IMR-90 (cell line): ENCODE measurements at regions of chr9 and their contacts with region 1.

Region 1: DNA sequence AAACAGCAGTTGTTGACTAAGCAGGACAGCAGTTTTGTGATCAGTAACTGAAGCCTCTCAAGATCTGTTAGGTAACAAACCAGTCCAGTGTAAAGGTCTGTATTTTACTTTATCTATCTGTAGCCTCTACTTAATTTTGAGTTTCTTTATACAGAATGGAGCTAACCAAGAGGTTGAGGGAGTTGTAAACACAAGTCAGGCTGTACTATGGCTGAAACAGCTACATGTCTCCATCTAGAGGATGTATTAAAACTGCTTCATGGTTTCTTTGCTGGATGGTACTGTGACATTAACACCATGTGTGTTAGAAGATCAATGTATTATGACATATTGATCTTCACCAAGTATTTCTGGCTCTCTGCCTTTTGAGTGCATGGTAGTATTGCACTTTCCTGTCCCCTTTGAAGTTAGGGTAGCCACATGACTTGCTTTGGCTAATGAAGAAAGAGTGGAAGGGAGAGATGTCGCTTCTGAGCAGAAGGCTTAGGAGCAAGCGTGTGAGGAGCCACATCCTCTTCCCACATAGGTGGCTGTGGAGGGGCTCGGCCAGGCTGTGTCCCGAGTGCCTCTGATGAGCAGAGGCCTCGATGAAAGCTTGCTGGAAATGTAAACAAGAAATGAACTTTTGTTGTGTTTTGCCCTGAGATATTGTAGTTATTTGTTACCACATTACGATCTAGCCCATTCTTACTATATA is 105.6 kb upstream of the PCA3 start:
- DNase-seq: peak; percentile 76
- ATAC-seq: peak; percentile 59
- H3K4me3 ChIP-seq: no peak overlapping the region
- H3K27ac ChIP-seq: no peak overlapping the region
- H3K4me1 ChIP-seq: peaks cover 9% of the 10 kb centered on the region
- H3K27me3 ChIP-seq: peaks cover 4% of the 10 kb centered on the region; the same call in 1 of the 2 replicates
- CTCF ChIP-seq: peak; percentile 83
- POLR2A ChIP-seq: no peak
- RAD21 ChIP-seq: peak; percentile 85

Region 2: DNA sequence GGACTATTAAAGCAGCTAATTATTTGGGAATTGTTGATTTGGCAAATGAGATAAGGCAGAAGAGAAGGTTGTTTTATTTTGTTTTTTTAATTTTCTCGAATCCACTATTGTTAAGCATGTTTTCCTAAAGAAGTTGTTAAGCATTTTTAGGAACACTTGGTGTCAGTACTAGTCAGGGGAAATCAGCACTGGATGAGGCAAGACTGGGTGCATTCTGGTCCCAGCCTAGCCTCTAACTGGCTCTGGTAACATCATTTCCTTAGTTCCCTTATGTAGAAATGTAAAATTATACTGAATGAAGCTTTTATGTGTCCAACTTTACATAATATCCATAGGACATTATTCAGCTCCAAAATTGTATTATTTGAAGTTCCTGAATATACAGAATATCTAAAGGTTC is 572.1 kb before region 1 on chr9:
- CTCF ChIA-PET with region 1: no interaction called
- POLR2A ChIA-PET with region 1: interaction called, 14 read pairs
- dilution Hi-C with region 1: no loop called
- in situ Hi-C with region 1: no loop called
- intact Hi-C with region 1: no loop called
- DNase-seq: peak; percentile 26
- ATAC-seq: peak; percentile 46
- H3K4me3 ChIP-seq: no peak overlapping the region
- H3K27ac ChIP-seq: no peak overlapping the region
- H3K4me1 ChIP-seq: no peaks in the 10 kb centered on the region
- H3K27me3 ChIP-seq: no peaks in the 10 kb centered on the region
- CTCF ChIP-seq: peak; percentile 44
- POLR2A ChIP-seq: no peak
- RAD21 ChIP-seq: peak; percentile 52

Region 3: DNA sequence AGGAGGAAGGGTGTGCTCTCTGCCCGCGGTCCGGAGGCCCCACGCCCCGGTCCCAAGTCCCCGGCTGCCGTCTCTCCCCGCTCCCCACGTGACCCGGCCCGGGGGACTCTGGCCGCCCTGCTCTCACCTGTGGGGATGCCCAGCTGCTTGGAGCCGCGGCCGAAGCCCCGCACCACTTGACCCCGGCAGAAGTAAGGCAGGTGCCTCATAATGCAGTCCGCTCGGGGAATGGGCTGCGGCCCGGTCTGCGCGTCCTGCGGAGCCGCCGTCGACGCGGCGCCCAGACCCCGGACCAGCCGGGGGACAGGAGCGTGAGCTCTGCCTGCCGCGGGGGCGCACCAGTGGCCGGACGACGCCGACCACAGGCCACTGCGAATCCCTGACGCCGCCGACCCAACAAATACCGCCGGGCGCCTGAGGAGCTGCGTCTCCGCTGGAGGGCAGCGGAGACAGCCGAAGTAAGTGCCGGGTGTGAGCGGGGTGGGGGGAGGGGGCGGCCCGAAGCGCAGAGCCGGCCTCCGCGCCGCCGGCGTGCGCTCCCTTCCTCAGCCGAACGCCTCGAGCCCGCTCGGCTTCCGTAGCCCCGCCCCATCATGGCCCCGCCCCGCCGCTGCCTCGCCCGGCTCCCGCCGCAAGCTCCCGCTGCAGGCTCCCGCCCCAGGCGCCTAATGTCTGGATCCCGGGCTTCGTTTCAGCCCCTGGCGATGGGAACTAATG is 264.6 kb before region 1 on chr9 and contains the start of gene RFK:
- CTCF ChIA-PET with region 1: no interaction called
- POLR2A ChIA-PET with region 1: no interaction called
- dilution Hi-C with region 1: no loop called
- in situ Hi-C with region 1: no loop called
- intact Hi-C with region 1: loop called (anchors 2 kb)
- DNase-seq: peak; percentile 93
- ATAC-seq: peak; percentile 96
- H3K4me3 ChIP-seq: peak within 1 kb of the TSS; percentile 86
- H3K27ac ChIP-seq: peak within 1 kb of the TSS; percentile 92
- H3K4me1 ChIP-seq: peaks cover 2% of the 10 kb centered on the region
- H3K27me3 ChIP-seq: no peaks in the 10 kb centered on the region
- CTCF ChIP-seq: peak; percentile 54
- POLR2A ChIP-seq: peak; percentile 76
- RAD21 ChIP-seq: peak; percentile 53
- total RNA-seq, gene RFK: 13.8 and 29.2 TPM in 2 replicates

Region 4: GRCh38 chr9:76403352-76403751 is 255.3 kb before region 1 on chr9:
- CTCF ChIA-PET with region 1: no interaction called
- POLR2A ChIA-PET with region 1: no interaction called
- dilution Hi-C with region 1: no loop called
- in situ Hi-C with region 1: no loop called
- intact Hi-C with region 1: loop called (anchors 2 kb)
- DNase-seq: peak; percentile 85
- ATAC-seq: peak; percentile 84
- H3K4me3 ChIP-seq: no peak overlapping the region
- H3K27ac ChIP-seq: peak overlapping the region; percentile 26; the same call in 1 of the 2 replicates
- H3K4me1 ChIP-seq: peaks cover 7% of the 10 kb centered on the region
- H3K27me3 ChIP-seq: no peaks in the 10 kb centered on the region
- CTCF ChIP-seq: peak; percentile 69
- POLR2A ChIP-seq: no peak
- RAD21 ChIP-seq: peak; percentile 54

Region 5: GRCh38 chr9:76445976-76446375 is 212.7 kb before region 1 on chr9:
- CTCF ChIA-PET with region 1: interaction called, 6 read pairs
- POLR2A ChIA-PET with region 1: no interaction called
- dilution Hi-C with region 1: no loop called
- in situ Hi-C with region 1: loop called (anchors 5 kb)
- intact Hi-C with region 1: loop called (anchors 1 kb)
- DNase-seq: no peak
- ATAC-seq: no peak
- H3K4me3 ChIP-seq: no peak overlapping the region
- H3K27ac ChIP-seq: no peak overlapping the region
- H3K4me1 ChIP-seq: peaks cover 5% of the 10 kb centered on the region
- H3K27me3 ChIP-seq: no peaks in the 10 kb centered on the region
- CTCF ChIP-seq: no peak
- POLR2A ChIP-seq: no peak
- RAD21 ChIP-seq: no peak

Region 6: GRCh38 chr9:76451234-76451633 is 207.4 kb before region 1 on chr9:
- CTCF ChIA-PET with region 1: interaction called, 6 read pairs
- POLR2A ChIA-PET with region 1: no interaction called
- dilution Hi-C with region 1: no loop called
- in situ Hi-C with region 1: loop called (anchors 5 kb)
- intact Hi-C with region 1: loop called (anchors 1 kb)
- DNase-seq: peak; percentile 85
- ATAC-seq: peak; percentile 53
- H3K4me3 ChIP-seq: no peak overlapping the region
- H3K27ac ChIP-seq: no peak overlapping the region
- H3K4me1 ChIP-seq: peaks cover 11% of the 10 kb centered on the region
- H3K27me3 ChIP-seq: no peaks in the 10 kb centered on the region
- CTCF ChIP-seq: no peak
- POLR2A ChIP-seq: no peak
- RAD21 ChIP-seq: no peak

Region 7: DNA sequence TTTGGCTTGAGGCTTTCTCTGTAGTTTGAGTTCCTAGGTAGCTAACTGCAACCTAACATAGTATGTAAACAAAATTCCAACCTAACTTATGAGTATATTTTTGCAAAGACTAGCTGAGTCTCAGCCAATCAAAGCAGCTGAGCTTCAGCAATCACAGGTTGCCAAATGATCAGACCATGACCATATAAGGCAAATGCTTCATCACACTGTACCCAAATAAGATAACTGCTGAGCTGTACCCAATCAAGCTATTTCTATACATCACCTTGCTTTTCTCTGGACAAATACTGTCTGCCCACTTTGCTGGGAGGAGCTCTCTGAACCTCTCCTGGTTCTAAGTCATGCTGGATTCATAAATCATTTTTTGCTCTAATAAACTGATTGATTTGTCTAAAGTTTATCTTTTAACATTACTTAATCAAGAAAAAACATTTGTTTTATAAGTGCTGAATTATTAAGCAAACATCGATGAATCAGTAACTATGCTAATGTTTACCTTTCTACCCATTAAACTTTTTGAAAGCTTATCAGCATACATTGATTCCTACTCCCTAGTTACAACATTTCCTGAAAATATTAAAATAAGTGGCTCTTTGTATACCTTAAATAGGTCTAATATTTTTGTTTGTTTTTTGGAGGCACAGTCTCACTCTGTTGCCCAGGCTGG is 24.2 kb before region 1 on chr9:
- CTCF ChIA-PET with region 1: no interaction called
- POLR2A ChIA-PET with region 1: no interaction called
- dilution Hi-C with region 1: no loop called
- in situ Hi-C with region 1: no loop called
- intact Hi-C with region 1: no loop called
- DNase-seq: peak; percentile 81
- ATAC-seq: peak; percentile 89
- H3K4me3 ChIP-seq: no peak overlapping the region
- H3K27ac ChIP-seq: peak overlapping the region; percentile 20; the same call in 1 of the 2 replicates
- H3K4me1 ChIP-seq: peaks cover 7% of the 10 kb centered on the region; the same call in 1 of the 2 replicates
- H3K27me3 ChIP-seq: no peaks in the 10 kb centered on the region
- CTCF ChIP-seq: no peak
- POLR2A ChIP-seq: no peak
- RAD21 ChIP-seq: no peak

Region 8: DNA sequence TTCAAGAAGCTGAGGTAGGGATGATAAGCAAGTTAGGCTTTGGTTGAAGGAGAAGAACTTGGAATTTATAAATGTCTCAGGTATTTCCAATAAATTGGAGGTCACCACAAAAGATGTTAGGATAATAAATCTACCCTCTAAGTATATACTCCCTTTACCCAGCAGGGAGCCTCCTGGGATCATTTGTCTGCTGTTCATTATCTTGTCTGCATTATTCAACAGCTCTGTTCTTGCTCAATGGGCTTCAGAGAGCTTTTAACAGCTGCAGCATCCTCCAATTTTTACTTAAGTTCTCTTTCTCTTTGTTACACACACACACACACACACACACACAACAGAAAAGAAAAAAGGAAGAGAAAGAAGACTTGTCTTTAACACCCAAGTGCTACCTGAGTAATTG is 467.0 kb after region 1 on chr9:
- CTCF ChIA-PET with region 1: no interaction called
- POLR2A ChIA-PET with region 1: no interaction called
- dilution Hi-C with region 1: no loop called
- in situ Hi-C with region 1: no loop called
- intact Hi-C with region 1: no loop called
- DNase-seq: no peak
- ATAC-seq: no peak
- H3K4me3 ChIP-seq: no peak overlapping the region
- H3K27ac ChIP-seq: no peak overlapping the region
- H3K4me1 ChIP-seq: no peaks in the 10 kb centered on the region
- H3K27me3 ChIP-seq: peaks cover under 1% of the 10 kb centered on the region; the same call in 1 of the 2 replicates
- CTCF ChIP-seq: no peak
- POLR2A ChIP-seq: no peak
- RAD21 ChIP-seq: no peak